Activated CD4-positive, alpha-beta T cell treated with anti-CD3 and anti-CD28 coated beads for 36 hours (primary cell): ENCODE measurements at regions of chr10 and their contacts with region 1.

Region 1: DNA sequence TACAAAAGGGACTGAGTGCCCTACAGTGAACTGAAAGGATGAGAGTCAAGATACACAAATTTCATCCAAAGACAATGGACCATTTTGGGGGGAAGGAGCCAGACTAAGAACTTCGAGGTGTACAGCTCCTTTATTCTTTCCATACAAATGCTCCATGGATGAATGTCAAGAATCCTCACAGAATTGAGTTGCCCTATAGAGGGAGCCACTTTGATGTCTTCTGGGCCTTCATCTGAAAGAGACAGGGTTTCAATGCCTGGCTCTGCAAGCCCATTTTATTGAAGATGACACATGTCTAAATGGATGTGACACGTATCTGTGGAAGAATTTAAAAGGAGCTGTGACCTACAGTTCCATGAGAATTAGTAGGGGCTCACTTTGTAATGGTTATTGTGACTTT is 32.0 kb upstream of the NRG3 start:
- DNase-seq: no peak
- ATAC-seq: no peak
- H3K4me3 Mint-ChIP-seq: no peak overlapping the region
- H3K27ac Mint-ChIP-seq: no peak overlapping the region
- H3K4me1 Mint-ChIP-seq: no peaks in the 10 kb centered on the region
- H3K27me3 Mint-ChIP-seq: peaks cover 7% of the 10 kb centered on the region

Region 2: DNA sequence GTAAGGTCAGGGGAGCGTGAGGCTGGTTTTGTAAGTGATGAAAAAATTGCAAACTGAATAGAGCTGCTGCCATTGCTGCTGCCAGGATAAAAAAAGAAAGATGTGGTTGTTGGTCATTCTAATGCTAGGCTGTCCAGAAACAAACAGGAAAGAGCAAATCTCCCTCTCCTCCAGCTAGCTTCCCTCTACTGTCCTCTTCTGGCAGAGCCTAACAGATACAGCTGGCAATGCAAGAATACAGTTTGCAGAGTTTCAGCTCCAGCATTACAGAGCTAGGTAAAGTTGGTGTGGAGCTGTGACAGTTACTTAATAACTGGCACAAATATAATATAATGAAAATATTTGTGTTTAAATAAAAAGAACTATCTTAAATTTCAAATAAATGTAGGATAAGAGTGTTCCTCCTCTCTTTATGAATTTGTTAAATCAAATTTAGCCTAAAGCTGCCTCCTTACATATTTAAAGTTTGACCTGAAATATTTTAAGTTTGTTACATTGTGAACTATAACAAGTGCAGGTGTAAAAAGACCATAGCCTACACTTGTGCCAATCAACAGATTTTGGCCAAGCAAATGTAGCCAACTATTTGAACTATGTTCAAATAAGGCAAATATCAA is 897.7 kb before region 1 on chr10:
- CTCF ChIA-PET with region 1: no interaction called
- POLR2A ChIA-PET with region 1: no interaction called
- intact Hi-C with region 1: loop called in 1 of 2 experiments (anchors 5 kb)
- DNase-seq: no peak
- ATAC-seq: no peak
- H3K4me3 Mint-ChIP-seq: no peak overlapping the region
- H3K27ac Mint-ChIP-seq: no peak overlapping the region
- H3K4me1 Mint-ChIP-seq: no peaks in the 10 kb centered on the region
- H3K27me3 Mint-ChIP-seq: peaks cover 3% of the 10 kb centered on the region

Region 3: DNA sequence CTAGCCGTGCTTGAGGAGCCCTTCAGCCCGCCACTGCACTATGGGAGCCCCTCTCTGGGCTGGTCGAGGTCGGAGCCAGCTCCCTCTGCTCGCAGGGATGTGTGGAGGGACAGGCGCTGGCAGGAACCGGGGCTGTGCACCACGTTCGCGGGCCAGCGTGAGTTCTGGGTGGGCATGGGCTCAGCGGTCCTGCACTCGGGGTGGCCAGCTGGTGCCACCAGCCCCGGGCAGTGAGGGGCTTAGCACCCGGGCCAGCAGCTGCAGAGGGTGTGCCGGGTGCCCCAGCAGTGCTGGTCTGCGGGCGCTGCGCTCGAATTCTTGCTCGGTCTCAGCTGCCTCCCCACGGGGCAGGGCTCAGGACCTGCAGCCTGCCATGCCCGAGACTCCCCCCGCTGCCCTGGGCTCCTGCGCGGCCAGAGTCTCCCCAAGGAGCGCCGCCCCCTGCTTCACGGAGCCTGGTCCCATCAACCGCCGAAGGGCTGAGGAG is 58.9 kb before region 1 on chr10:
- CTCF ChIA-PET with region 1: no interaction called
- POLR2A ChIA-PET with region 1: no interaction called
- intact Hi-C with region 1: no loop called
- DNase-seq: no peak
- ATAC-seq: no peak
- H3K4me3 Mint-ChIP-seq: no peak overlapping the region
- H3K27ac Mint-ChIP-seq: no peak overlapping the region
- H3K4me1 Mint-ChIP-seq: no peaks in the 10 kb centered on the region
- H3K27me3 Mint-ChIP-seq: no peaks in the 10 kb centered on the region

Region 4: DNA sequence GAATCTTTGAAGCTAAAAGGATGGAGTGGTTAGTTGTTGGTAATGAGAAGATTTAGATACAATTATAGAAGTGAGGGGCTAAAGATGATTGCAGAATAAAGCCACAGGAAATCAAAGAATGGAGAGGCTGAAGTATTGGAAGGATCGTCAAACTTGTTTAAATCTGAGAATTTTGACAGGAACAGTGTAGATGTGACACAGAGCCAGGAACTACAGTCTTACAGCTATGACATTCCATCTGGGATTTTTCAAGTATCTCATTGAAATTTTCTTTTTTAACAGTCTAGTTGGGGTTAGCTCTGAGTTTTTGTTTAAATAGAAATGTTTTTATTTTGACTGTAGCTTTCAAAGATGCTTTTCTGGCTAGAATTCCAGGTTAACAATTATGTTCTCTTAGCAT is 213.4 kb after region 1 on chr10:
- CTCF ChIA-PET with region 1: no interaction called
- POLR2A ChIA-PET with region 1: no interaction called
- intact Hi-C with region 1: no loop called
- DNase-seq: no peak
- ATAC-seq: no peak
- H3K4me3 Mint-ChIP-seq: no peak overlapping the region
- H3K27ac Mint-ChIP-seq: no peak overlapping the region
- H3K4me1 Mint-ChIP-seq: no peaks in the 10 kb centered on the region
- H3K27me3 Mint-ChIP-seq: no peaks in the 10 kb centered on the region